Activated CD4-positive, alpha-beta T cell treated with anti-CD3 and anti-CD28 coated beads for 36 hours (primary cell): ENCODE measurements at regions of chr7 and their contacts with region 1.

Region 1: GRCh38 chr7:133081599-133082389 is at the start of gene CHCHD3:
- DNase-seq: peak; percentile 98
- ATAC-seq: peak; percentile 100
- H3K4me3 Mint-ChIP-seq: peak within 1 kb of the TSS; percentile 97
- H3K27ac Mint-ChIP-seq: peak within 1 kb of the TSS; percentile 89
- H3K4me1 Mint-ChIP-seq: peaks cover 22% of the 10 kb centered on the region
- H3K27me3 Mint-ChIP-seq: no peaks in the 10 kb centered on the region
- total RNA-seq, gene CHCHD3: 63.0 to 71.9 TPM

Region 2: GRCh38 chr7:132773527-132773956 is 308.3 kb before region 1 on chr7:
- CTCF ChIA-PET with region 1: no interaction called
- POLR2A ChIA-PET with region 1: no interaction called
- intact Hi-C with region 1: loop called in 1 of 2 experiments (anchors 5 kb)
- DNase-seq: no peak
- ATAC-seq: peak; percentile 70
- H3K4me3 Mint-ChIP-seq: no peak overlapping the region
- H3K27ac Mint-ChIP-seq: peak overlapping the region; percentile 1
- H3K4me1 Mint-ChIP-seq: peaks cover 46% of the 10 kb centered on the region
- H3K27me3 Mint-ChIP-seq: peaks cover 2% of the 10 kb centered on the region

Region 3: GRCh38 chr7:133056370-133057238 is 25.2 kb before region 1 on chr7:
- CTCF ChIA-PET with region 1: no interaction called
- POLR2A ChIA-PET with region 1: no interaction called
- intact Hi-C with region 1: no loop called
- DNase-seq: no peak
- ATAC-seq: no peak
- H3K4me3 Mint-ChIP-seq: no peak overlapping the region
- H3K27ac Mint-ChIP-seq: no peak overlapping the region
- H3K4me1 Mint-ChIP-seq: peaks cover 43% of the 10 kb centered on the region
- H3K27me3 Mint-ChIP-seq: no peaks in the 10 kb centered on the region

Region 4: GRCh38 chr7:133252858-133253518 is 171.2 kb after region 1 on chr7 and contains the start of gene EXOC4:
- CTCF ChIA-PET with region 1: interaction called, 3 read pairs
- POLR2A ChIA-PET with region 1: no interaction called
- intact Hi-C with region 1: loop called (anchors 1 kb)
- DNase-seq: peak; percentile 92
- ATAC-seq: peak; percentile 100
- H3K4me3 Mint-ChIP-seq: peak within 1 kb of the TSS; percentile 85
- H3K27ac Mint-ChIP-seq: peak within 1 kb of the TSS; percentile 83
- H3K4me1 Mint-ChIP-seq: peaks cover 32% of the 10 kb centered on the region
- H3K27me3 Mint-ChIP-seq: no peaks in the 10 kb centered on the region
- total RNA-seq, gene EXOC4: 51.9 to 90.1 TPM

Region 5: DNA sequence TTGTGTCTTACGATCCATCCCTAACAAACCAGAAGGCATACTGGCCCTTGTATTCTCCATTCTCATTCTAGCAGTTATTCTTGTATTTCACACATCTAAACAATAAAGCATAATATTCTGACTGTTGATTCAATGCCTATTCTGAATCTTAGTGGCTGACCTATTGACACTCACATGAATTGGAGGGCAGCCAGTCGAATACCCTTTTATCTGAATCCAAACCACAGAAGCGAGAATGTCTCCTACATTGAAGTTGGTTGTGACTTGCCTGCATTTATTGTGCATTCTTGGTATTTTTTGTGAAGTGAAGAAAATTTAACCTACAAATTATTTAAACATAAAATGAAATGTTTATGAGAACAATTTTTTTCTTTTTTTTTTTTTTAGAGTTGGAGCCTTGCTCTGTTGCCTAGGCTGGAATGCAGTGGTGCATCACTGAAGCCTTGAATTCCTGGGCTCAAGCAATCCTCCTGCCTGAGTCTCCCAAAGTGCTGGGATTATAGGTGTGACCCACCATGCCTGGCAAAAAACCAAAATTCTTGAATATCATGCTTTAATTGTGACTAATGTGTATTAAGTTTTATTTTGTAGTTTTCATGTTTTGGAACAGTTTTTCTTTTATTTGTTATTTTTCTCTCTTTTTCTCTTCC is 193.8 kb after region 1 on chr7:
- CTCF ChIA-PET with region 1: no interaction called
- POLR2A ChIA-PET with region 1: no interaction called
- intact Hi-C with region 1: no loop called
- DNase-seq: no peak
- ATAC-seq: no peak
- H3K4me3 Mint-ChIP-seq: no peak overlapping the region
- H3K27ac Mint-ChIP-seq: no peak overlapping the region
- H3K4me1 Mint-ChIP-seq: peaks cover 2% of the 10 kb centered on the region
- H3K27me3 Mint-ChIP-seq: no peaks in the 10 kb centered on the region

Region 6: DNA sequence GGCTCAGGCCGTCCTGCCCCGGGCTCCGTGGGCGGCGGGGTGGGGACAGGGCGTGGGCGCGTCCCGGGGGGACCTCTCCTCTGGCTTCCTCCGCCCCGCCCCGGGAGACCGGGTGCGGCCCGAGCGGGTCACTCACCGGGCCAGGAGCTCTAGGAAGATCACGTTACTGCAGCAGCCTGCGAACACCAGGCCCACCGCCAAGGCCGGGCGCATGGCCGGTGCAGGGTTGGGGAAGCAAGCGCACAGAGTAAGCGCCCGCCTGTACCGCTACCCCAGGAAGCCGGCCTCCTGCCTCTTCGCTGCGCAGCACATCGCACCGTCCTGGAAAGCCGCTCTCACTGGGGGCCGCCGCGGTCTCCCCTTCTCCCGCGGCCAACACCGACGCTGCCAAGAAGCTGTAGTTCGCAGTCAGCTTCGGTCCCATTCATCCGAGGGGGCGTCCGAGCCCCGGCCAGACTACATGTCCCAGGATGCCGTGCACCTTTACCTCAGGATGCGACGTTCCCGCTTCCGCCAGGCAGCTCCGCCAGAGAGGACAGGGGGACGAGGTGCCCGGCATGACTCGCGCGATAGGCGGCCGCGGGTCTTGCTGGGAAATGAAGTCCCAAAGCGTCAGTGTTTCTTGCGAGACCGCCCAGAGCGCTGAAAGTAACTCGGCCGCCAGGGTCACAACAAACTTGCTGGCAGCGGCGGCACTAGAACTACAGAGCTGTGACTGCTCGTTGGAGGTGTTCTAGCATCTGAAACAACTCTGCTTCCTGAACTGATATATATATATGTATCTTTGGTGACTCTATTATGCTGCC is 1234.9 kb after region 1 on chr7 and contains the start of gene SLC35B4:
- CTCF ChIA-PET with region 1: no interaction called
- POLR2A ChIA-PET with region 1: interaction called, 4 read pairs
- intact Hi-C with region 1: loop called (anchors 1 to 2 kb)
- DNase-seq: peak; percentile 97
- ATAC-seq: peak; percentile 100
- H3K4me3 Mint-ChIP-seq: peak within 1 kb of the TSS; percentile 85
- H3K27ac Mint-ChIP-seq: peak within 1 kb of the TSS; percentile 80
- H3K4me1 Mint-ChIP-seq: peaks cover 15% of the 10 kb centered on the region
- H3K27me3 Mint-ChIP-seq: peaks cover 6% of the 10 kb centered on the region
- total RNA-seq, gene SLC35B4: 13.6 to 15.5 TPM